ENCODE measurements at regions of chr11 and their contacts with region 1.

Region 1: DNA sequence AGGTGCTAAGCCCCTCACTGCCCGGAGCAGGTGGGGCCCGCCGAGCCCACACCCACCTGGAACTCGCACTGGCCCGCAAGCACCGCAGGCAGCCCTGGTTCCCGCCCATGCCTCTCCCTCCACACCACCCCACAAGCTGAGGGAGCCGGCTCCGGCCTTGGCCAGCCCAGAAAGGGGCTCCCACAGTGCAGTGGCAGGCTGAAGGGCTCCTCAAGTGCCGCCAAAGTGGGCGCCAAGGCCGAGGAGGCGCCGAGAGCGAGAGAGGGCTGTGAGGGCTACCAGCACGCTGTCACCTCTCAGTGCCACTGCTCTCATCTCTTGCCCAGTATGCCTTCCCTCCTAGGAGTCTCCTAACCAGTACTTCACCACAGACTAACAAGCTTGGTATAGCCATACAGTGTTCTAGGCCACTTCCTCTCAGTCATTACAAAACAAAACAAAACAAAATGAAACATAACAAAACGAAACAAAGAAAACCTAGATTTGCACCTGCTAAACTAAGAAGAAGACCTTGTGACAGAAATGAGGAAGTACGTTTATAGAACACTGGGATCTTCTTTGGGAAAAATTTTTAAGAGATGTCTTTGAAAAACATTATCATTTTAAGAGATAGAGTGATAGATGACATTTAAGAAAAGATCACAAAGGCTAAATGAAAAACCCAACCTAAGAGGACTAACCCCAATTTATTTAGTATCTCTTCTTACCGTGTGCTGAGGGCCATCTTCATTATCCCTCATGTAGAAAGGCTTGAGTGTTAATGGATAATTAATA is 47.7 kb upstream of the GAB2 start:
- DNase-seq: peak; percentile 51
- H3K4me3 Mint-ChIP-seq: no peak overlapping the region
- H3K27ac Mint-ChIP-seq: peak overlapping the region; percentile 65
- H3K4me1 Mint-ChIP-seq: peaks cover 18% of the 10 kb centered on the region
- H3K27me3 Mint-ChIP-seq: no peaks in the 10 kb centered on the region

Region 2: GRCh38 chr11:78574386-78575381 is 109.3 kb after region 1 on chr11 and contains the start of gene NARS2:
- CTCF ChIA-PET with region 1: no interaction called
- intact Hi-C with region 1: loop called (anchors 1 kb)
- DNase-seq: peak; percentile 99
- H3K4me3 Mint-ChIP-seq: peak within 1 kb of the TSS; percentile 92
- H3K27ac Mint-ChIP-seq: peak within 1 kb of the TSS; percentile 84
- H3K4me1 Mint-ChIP-seq: peaks cover 23% of the 10 kb centered on the region
- H3K27me3 Mint-ChIP-seq: no peaks in the 10 kb centered on the region
- total RNA-seq, gene NARS2: 27.7 to 28.3 TPM

Region 3: DNA sequence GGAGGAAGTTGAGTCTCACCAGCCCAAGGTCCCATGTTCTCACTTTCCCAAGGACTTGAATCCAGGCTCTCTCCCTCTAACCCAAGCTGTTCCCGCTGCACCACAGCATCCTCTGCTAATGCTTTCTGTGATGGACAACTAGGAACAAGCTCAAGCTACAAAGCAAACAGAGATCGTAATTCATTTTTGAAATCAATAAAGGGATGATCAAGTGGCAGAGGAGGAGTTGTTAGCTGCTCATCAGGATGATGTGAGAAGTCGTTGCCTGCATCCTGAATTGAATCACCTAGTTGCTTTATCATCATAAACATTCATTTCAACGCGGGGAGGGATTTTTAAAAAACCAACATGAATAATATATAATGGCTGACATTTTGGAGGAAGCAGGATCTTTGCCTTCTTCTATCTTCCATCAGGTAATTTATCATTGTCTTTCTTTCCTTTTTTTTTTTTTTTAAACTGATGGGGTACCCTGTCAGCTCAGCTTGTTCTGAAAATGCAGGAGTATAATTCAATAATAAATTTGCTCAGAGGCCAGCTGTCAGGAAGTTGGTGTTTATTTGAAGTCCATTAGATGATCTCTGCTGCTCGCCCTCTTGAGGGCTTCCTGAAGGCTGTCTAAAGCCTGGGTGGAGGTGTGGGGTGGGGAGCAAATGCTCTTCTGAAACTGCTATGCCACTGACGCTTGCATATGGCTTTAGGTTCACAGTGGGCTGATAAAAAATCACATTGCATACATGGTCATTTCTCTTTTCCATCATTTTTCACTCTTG is 283.7 kb after region 1 on chr11:
- CTCF ChIA-PET with region 1: no interaction called
- intact Hi-C with region 1: no loop called
- DNase-seq: no peak
- H3K4me3 Mint-ChIP-seq: no peak overlapping the region
- H3K27ac Mint-ChIP-seq: no peak overlapping the region
- H3K4me1 Mint-ChIP-seq: no peaks in the 10 kb centered on the region
- H3K27me3 Mint-ChIP-seq: peaks cover 7% of the 10 kb centered on the region